Endothelial cell of umbilical vein (primary cell): ENCODE measurements at regions of chr15 and their contacts with region 1.

Region 1: GRCh38 chr15:73972984-73973682 is 19.0 kb downstream of the STOML1 start:
- DNase-seq: peak; percentile 81
- H3K4me3 ChIP-seq: no peak overlapping the region
- H3K27ac ChIP-seq: no peak overlapping the region
- H3K4me1 ChIP-seq: peaks cover 15% of the 10 kb centered on the region
- H3K27me3 ChIP-seq: no peaks in the 10 kb centered on the region
- CTCF ChIP-seq: peak; percentile 86 to 89
- POLR2A ChIP-seq: no peak

Region 2: GRCh38 chr15:73956739-73957051 is 16.4 kb before region 1 on chr15:
- CTCF ChIA-PET with region 1: interaction called, 217 read pairs
- POLR2A ChIA-PET with region 1: no interaction called
- dilution Hi-C with region 1: no loop called
- intact Hi-C with region 1: no loop called
- DNase-seq: peak; percentile 77
- H3K4me3 ChIP-seq: no peak overlapping the region
- H3K27ac ChIP-seq: no peak overlapping the region
- H3K4me1 ChIP-seq: peaks cover 10% of the 10 kb centered on the region
- H3K27me3 ChIP-seq: no peaks in the 10 kb centered on the region
- CTCF ChIP-seq: no peak
- POLR2A ChIP-seq: no peak

Region 3: DNA sequence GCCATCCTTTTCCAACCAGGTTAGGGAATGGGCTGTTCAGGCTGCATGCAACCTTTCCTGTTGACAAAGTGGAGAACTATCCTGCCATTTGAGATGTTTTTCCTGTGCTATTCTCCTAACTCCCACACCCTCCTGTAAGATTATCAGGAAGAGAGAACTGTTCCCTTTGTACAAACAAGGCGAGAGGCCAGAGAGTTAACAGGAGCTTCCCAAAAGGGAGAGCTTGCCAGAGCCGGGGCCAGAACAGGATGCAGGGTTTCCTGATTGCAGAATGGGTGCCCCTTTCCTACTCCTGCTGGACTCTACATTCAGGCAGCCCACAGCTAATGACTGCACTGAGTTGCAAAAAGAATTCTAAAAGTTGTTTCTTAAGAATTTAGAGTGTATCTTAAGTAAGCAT is 38.5 kb after region 1 on chr15:
- CTCF ChIA-PET with region 1: interaction called, 25 read pairs
- POLR2A ChIA-PET with region 1: no interaction called
- dilution Hi-C with region 1: no loop called
- intact Hi-C with region 1: no loop called
- DNase-seq: peak; percentile 92
- H3K4me3 ChIP-seq: peak overlapping the region in 1 of 3 experiments; percentile 56
- H3K27ac ChIP-seq: peak overlapping the region; percentile 47
- H3K4me1 ChIP-seq: peaks cover 51% of the 10 kb centered on the region
- H3K27me3 ChIP-seq: no peaks in the 10 kb centered on the region
- CTCF ChIP-seq: no peak
- POLR2A ChIP-seq: peak; percentile 40

Region 4: GRCh38 chr15:74036271-74037170 is 63.4 kb after region 1 on chr15:
- CTCF ChIA-PET with region 1: interaction called, 651 read pairs
- POLR2A ChIA-PET with region 1: interaction called, 9 read pairs
- dilution Hi-C with region 1: no loop called
- intact Hi-C with region 1: loop called (anchors 1 kb)
- DNase-seq: peak; percentile 59
- H3K4me3 ChIP-seq: no peak overlapping the region
- H3K27ac ChIP-seq: no peak overlapping the region
- H3K4me1 ChIP-seq: peaks cover 9% of the 10 kb centered on the region
- H3K27me3 ChIP-seq: no peaks in the 10 kb centered on the region
- CTCF ChIP-seq: peak; percentile 53 to 76
- POLR2A ChIP-seq: no peak

Region 5: DNA sequence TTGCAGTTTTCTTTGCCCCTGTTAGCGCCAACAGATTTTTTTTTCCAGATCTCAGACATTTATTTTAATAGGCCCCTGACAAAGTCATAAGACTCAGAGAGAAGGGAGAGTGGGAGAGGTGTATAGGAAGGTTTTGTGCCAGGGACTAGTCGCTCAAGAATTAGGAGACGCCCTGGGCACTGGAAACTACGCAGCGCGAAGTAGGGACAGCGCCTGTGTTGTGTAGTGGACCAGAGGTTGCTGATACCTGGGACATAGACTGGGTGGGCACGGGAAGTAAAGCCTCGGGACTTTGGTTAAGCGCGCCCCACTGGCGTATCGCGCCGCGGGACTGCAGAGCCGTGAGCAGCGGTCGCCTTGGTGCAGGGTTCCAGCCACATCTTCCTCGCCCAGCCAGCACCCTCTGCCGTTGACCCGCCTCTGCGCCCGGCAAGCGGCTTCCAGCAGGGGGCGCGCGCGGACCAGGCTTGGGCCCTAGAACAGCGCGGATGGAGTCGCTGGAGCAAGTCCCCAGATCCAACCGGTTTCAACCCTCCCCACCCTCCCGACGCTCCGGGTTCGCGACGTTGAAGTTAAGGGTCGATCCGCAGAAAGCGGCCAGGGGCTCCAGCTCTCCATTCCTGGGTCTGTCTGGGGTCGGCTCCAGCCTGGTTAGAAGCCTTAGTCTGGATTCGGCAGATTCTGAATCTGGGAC is 154.3 kb after region 1 on chr15:
- CTCF ChIA-PET with region 1: interaction called, 11 read pairs
- POLR2A ChIA-PET with region 1: no interaction called
- dilution Hi-C with region 1: no loop called
- intact Hi-C with region 1: loop called (anchors 5 kb)
- DNase-seq: peak; percentile 75
- H3K4me3 ChIP-seq: peak overlapping the region in 1 of 3 experiments; percentile 14
- H3K27ac ChIP-seq: no peak overlapping the region
- H3K4me1 ChIP-seq: peaks cover 4% of the 10 kb centered on the region
- H3K27me3 ChIP-seq: peaks cover 56 to 71% of the 10 kb centered on the region in 2 experiments
- CTCF ChIP-seq: peak; percentile 95 to 100
- POLR2A ChIP-seq: no peak

Region 6: DNA sequence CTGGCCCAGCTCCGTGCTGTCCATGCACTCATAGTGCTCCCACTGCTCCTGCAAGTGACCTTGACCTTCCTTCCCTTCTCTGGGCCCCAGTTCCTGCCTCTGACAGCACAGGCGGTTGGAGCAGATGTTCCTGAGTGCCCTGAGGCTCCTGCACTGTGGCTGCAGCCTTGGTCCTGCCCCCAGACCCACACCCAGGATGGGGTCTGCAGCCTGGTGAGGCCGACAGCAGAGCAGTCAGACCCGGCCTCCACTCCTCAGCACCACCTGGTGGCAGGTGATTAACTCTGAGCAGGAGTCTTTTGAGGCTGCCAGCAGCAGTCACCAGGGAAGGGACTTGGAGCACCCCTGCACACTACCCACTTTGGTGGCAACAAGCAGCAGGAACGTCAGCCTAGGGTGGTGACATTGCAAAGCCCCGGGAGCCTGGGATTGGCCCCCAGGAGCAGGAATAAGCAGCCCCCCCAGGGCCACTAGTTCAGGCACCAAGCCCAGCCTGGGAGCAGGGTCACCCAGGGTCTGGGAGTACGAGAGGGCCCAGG is 329.8 kb after region 1 on chr15:
- CTCF ChIA-PET with region 1: interaction called, 55 read pairs
- POLR2A ChIA-PET with region 1: no interaction called
- dilution Hi-C with region 1: no loop called
- intact Hi-C with region 1: loop called (anchors 5 kb)
- DNase-seq: peak; percentile 9
- H3K4me3 ChIP-seq: no peak overlapping the region
- H3K27ac ChIP-seq: no peak overlapping the region
- H3K4me1 ChIP-seq: no peaks in the 10 kb centered on the region
- H3K27me3 ChIP-seq: peaks cover 17 to 31% of the 10 kb centered on the region in 2 experiments
- CTCF ChIP-seq: peak; percentile 20 to 45
- POLR2A ChIP-seq: no peak

Region 7: DNA sequence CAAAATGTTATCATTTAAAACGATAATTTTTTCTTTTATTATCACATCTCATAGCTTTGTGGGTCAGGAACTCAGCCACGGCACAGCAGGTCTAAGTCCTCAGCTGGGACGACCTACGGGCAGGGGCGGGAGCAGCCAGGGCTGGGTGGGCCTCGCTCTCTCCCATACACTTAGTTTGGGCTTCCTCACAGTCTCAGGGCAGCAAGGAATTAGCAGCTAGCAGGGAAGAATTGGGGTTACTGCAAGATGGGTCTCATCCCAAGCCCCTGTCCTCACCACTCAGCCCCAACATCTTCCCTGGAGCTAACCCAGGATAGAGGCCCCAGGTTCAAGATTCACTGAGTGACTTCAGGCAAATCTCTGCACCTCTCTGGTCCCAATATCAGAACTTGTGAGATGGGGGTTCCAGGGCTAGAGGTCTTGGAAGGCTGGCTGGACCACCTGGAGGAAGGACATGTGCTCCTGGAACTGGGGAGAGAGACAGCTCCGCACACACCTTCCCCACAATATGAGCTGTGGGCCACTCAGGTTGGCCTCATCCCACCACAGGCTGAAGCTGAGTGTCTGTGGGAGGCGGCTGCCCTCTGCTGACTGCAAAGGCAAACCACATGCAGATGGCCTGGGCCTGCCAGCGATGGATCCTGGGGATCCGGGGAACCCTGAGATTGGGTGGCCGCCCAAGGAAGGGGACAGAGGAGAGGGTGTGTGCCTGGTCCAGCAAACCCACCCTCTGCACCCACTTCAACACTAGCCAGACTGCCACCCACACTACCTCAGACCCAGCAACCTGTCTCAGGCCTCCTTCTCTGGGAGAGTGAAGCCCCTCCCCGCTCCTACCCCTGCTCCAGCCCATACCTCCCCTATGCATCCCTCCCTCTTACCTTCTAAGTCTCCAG is 349.3 kb after region 1 on chr15:
- CTCF ChIA-PET with region 1: interaction called, 46 read pairs
- POLR2A ChIA-PET with region 1: no interaction called
- dilution Hi-C with region 1: no loop called
- intact Hi-C with region 1: loop called (anchors 2 kb)
- DNase-seq: peak; percentile 49
- H3K4me3 ChIP-seq: no peak overlapping the region
- H3K27ac ChIP-seq: no peak overlapping the region
- H3K4me1 ChIP-seq: no peaks in the 10 kb centered on the region
- H3K27me3 ChIP-seq: peaks cover 0 to 1% of the 10 kb centered on the region in 2 experiments
- CTCF ChIP-seq: peak; percentile 74 to 93
- POLR2A ChIP-seq: no peak